ENCODE measurements at regions of chr7 and their contacts with region 1.

Region 1: DNA sequence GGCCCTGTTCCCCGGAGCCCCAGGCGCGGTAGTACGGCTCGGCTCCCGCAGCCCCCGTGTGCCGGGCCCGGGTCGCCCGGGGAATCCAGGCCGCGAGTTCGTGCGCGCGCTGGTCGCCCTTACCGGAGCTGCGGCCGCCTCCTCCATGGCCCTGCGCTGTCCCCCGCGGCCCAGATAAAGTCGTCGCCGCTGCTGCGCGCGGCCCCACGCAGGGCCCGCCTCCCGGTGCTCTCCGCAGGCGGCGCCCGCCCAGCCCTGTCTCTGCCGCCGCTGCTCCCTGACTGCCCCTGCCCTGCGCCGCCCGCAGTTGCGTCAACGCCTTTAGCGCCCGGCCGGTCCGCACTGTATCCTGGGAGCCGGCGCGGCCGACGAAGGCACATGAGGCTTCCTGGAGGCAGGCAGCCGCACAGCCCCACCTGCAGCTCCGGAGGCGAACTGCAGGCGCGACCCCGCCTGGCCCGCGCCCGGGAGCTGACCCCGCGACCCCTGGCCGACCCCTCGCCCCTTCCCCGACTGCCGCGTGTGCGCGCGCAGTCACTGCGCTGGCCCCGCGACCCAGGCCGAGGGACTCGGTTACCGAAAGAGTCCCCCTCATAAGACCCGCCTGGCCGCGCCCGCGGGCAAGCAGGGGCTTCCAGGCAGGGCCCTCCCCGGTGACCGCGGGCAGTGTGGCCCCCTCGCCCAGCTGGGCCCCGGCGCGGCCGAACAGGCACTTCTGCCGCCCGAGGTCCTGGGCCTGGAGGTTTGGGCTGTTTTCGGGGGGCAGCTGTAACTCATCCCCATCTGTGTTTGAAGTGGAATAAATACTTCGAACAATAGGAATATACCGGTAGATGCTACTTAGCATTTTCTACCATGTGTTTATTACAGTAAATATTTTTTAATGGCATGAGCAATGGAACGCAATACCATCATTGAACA is 127.1 kb upstream of the ZNF746 start:
- DNase-seq: peak; percentile 79 to 93 (median 84)
- ATAC-seq: peak; percentile 95
- H3K4me3 ChIP-seq: peak overlapping the region; percentile 88
- H3K4me3 Mint-ChIP-seq: peak overlapping the region; percentile 91 to 96 (median 94)
- H3K27ac ChIP-seq: peak overlapping the region; percentile 80
- H3K27ac Mint-ChIP-seq: peak overlapping the region; percentile 50 to 95 (median 90)
- H3K4me1 ChIP-seq: peaks cover 19 to 37% of the 10 kb centered on the region in 2 donors
- H3K4me1 Mint-ChIP-seq: peaks cover 28 to 42% (median 37%) of the 10 kb centered on the region in 7 donors
- H3K27me3 ChIP-seq: no peaks in the 10 kb centered on the region
- H3K27me3 Mint-ChIP-seq: peaks cover 0 to 24% (median 4%) of the 10 kb centered on the region in 5 donors

Region 2: DNA sequence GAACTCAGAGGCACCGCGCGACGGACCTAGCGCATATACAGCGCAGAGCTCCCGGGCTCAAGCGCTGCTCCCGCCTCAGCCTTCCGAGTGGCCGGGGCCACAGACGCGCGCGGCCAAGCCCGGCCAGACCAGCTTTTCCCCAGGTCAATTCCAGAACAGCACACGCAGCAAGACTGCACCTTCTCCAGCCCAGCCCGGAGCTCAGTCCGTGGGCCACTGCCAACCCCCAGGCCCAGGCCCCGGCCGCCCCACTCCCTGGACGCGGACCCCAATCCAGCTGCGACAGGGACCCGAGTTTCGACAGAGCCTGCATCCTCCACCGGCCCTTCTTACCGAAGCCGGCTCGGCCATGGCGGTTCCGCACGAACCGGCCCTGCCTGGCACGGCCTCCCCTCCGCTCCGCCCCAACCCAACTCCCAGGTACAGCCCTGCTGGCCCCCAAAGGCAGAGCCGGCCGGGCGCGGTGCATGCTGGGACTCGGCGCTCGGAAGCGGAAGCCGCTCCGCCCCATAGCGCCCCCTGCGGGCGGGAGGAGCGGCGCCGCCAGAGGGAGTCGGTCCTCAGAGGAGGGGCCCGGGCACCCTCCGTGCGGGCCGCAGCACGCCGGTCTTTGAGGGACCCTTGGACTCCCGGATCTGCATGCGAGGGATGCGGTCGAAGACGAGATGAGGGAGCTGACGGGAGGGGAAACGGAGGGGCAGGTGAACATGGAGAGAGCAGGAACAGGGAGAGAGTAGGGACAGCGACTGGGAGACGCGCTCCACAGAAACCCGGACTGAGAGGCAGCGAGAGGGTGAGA is 498.6 kb before region 1 on chr7 and contains the start of gene ZNF425:
- CTCF ChIA-PET with region 1: no interaction called
- POLR2A ChIA-PET with region 1: no interaction called
- intact Hi-C with region 1: loop called (anchors 2 to 5 kb)
- DNase-seq: peak; percentile 87 to 98 (median 92)
- ATAC-seq: peak; percentile 98
- H3K4me3 ChIP-seq: peak within 1 kb of the TSS; percentile 99
- H3K4me3 Mint-ChIP-seq: peak within 1 kb of the TSS; percentile 91 to 100 (median 100)
- H3K27ac ChIP-seq: peak within 1 kb of the TSS; percentile 91
- H3K27ac Mint-ChIP-seq: peak within 1 kb of the TSS; percentile 90 to 100 (median 98)
- H3K4me1 ChIP-seq: no peaks in the 10 kb centered on the region
- H3K4me1 Mint-ChIP-seq: peaks cover 19 to 28% (median 22%) of the 10 kb centered on the region in 7 donors
- H3K27me3 ChIP-seq: no peaks in the 10 kb centered on the region
- H3K27me3 Mint-ChIP-seq: no peaks in the 10 kb centered on the region
- total RNA-seq, gene ZNF425: 0.61 to 4.9 (median 1.0) TPM

Region 3: DNA sequence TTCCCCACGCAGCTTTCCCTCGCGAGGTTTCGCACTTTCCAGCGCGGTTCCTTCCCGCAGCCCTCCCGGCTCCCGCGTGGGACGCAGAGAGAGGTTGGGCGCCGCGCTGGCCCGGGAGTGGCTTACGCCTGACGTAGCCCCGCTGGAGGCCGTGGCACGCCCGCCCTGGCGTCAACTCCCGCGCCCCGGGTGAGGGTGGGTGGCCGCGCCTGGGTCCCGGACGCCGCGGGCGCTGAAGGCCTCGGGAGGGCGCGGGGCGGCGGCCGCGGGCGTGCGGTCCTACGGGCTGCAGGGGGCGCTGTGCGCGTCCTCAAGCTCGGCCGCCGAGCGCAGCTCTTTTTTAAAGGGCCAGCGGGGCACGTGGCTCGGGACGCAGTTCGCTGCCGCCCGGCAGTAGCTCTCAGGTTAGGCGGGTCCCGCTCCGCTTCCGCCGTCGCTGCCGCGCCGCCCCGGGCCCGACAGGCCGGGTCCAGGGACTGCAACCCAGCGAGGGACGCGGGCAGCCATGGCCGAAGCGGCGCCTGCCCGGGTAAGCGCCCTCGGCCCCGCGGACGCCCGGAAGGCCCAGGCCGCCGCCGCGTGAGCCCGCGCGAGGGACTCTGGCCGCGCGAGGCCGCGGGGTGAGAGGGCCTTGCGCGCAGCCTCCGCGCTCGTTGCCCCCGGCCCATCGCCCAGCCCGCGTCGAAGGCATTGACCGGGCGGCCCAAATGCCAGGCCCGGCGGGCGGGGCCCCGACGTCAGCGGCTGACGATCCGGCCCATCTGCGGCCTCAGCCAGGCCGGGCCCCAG is 362.7 kb before region 1 on chr7 and contains the start of gene ZNF783:
- CTCF ChIA-PET with region 1: no interaction called
- POLR2A ChIA-PET with region 1: no interaction called
- intact Hi-C with region 1: loop called (anchors 1 to 2 kb)
- DNase-seq: peak; percentile 77 to 88 (median 86)
- ATAC-seq: peak; percentile 97
- H3K4me3 ChIP-seq: peak within 1 kb of the TSS; percentile 74
- H3K4me3 Mint-ChIP-seq: peak within 1 kb of the TSS; percentile 83 to 91 (median 88)
- H3K27ac ChIP-seq: peak within 1 kb of the TSS; percentile 71
- H3K27ac Mint-ChIP-seq: peak within 1 kb of the TSS; percentile 84 to 93 (median 90)
- H3K4me1 ChIP-seq: peaks cover 19 to 20% of the 10 kb centered on the region in 2 donors
- H3K4me1 Mint-ChIP-seq: peaks cover 22 to 46% (median 32%) of the 10 kb centered on the region in 7 donors
- H3K27me3 ChIP-seq: no peaks in the 10 kb centered on the region
- H3K27me3 Mint-ChIP-seq: no peaks in the 10 kb centered on the region
- total RNA-seq, gene ZNF783: 23.3 to 49.2 (median 36.0) TPM

Region 4: GRCh38 chr7:149460493-149461277 is 164.0 kb before region 1 on chr7 and contains the start of gene ZNF777:
- CTCF ChIA-PET with region 1: no interaction called
- POLR2A ChIA-PET with region 1: interaction called, 3 read pairs
- intact Hi-C with region 1: loop called (anchors 1 kb)
- DNase-seq: peak; percentile 65 to 84 (median 80)
- ATAC-seq: peak; percentile 99
- H3K4me3 ChIP-seq: peak within 1 kb of the TSS; percentile 80
- H3K4me3 Mint-ChIP-seq: peak within 1 kb of the TSS; percentile 78 to 91 (median 87)
- H3K27ac ChIP-seq: peak within 1 kb of the TSS; percentile 72
- H3K27ac Mint-ChIP-seq: peak within 1 kb of the TSS; percentile 28 to 89 (median 76)
- H3K4me1 ChIP-seq: peaks cover 4 to 16% of the 10 kb centered on the region in 2 donors
- H3K4me1 Mint-ChIP-seq: peaks cover 13 to 46% (median 35%) of the 10 kb centered on the region in 7 donors
- H3K27me3 ChIP-seq: no peaks in the 10 kb centered on the region
- H3K27me3 Mint-ChIP-seq: peaks cover 4 to 29% (median 10%) of the 10 kb centered on the region in 5 donors
- total RNA-seq, gene ZNF777: 11.2 to 16.1 (median 14.3) TPM

Region 5: DNA sequence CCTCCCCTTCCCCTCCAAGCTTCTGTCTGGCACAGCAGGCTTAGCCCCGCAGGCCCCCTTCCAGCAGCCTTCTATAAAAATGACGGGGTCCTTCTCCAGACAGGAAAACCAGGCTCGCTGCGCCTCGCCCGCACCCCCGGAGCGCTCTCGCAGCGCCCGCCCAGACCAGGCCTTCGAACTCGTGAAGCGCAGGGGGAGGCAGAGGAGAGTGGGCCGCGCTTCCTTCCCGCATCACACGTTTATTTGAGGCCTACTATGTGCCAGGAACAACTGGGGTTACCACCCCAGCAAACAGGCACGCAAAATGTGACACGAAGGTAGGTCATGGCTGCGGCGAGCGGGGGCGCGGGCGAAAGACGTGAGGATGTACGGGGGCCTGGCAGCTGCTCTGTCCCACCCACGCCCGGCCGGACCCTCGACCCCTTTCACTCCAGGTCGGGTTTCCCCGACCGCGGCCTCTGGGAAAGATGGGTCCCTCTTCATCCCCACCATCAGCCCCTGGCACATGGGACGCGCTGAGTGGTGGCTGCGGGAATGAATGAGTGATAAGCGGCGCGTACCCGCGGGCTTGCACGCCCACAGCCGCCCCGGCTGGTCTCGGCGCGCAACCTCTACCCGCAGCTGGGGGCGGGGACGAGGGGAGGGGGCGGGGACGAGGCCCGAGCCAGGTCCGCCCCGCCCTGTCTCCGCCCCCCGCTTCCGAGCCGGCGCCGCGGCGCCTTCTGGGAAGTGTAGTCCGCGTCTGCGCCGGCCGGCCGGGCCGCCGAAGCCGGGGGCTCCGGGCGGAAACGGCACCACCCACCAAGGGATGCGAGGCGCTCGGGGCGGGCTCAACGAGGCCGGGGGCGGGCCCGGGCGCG is 89.6 kb after region 1 on chr7:
- CTCF ChIA-PET with region 1: interaction called, 3 read pairs
- POLR2A ChIA-PET with region 1: no interaction called
- intact Hi-C with region 1: loop called (anchors 1 kb)
- DNase-seq: peak; percentile 68 to 89 (median 84)
- ATAC-seq: peak; percentile 99
- H3K4me3 ChIP-seq: peak overlapping the region; percentile 75
- H3K4me3 Mint-ChIP-seq: peak overlapping the region; percentile 71 to 87 (median 80)
- H3K27ac ChIP-seq: peak overlapping the region; percentile 72
- H3K27ac Mint-ChIP-seq: peak overlapping the region in 4 of 9 donors; percentile 5 to 72 (median 54)
- H3K4me1 ChIP-seq: peaks cover 10 to 13% of the 10 kb centered on the region in 2 donors
- H3K4me1 Mint-ChIP-seq: peaks cover 12 to 26% (median 19%) of the 10 kb centered on the region in 7 donors
- H3K27me3 ChIP-seq: no peaks in the 10 kb centered on the region
- H3K27me3 Mint-ChIP-seq: peaks cover 0 to 4% (median 0%) of the 10 kb centered on the region in 5 donors

Region 6: GRCh38 chr7:151226875-151227782 is 1602.5 kb after region 1 on chr7 and contains the start of gene ABCF2:
- CTCF ChIA-PET with region 1: no interaction called
- POLR2A ChIA-PET with region 1: no interaction called
- intact Hi-C with region 1: loop called (anchors 1 to 2 kb)
- DNase-seq: peak; percentile 91 to 98 (median 97)
- ATAC-seq: peak; percentile 99
- H3K4me3 ChIP-seq: peak within 1 kb of the TSS; percentile 91
- H3K4me3 Mint-ChIP-seq: peak within 1 kb of the TSS; percentile 90 to 99 (median 97)
- H3K27ac ChIP-seq: peak within 1 kb of the TSS; percentile 84
- H3K27ac Mint-ChIP-seq: peak within 1 kb of the TSS; percentile 68 to 97 (median 95)
- H3K4me1 ChIP-seq: peaks cover 16 to 25% of the 10 kb centered on the region in 2 donors
- H3K4me1 Mint-ChIP-seq: peaks cover 31 to 55% (median 47%) of the 10 kb centered on the region in 7 donors
- H3K27me3 ChIP-seq: no peaks in the 10 kb centered on the region
- H3K27me3 Mint-ChIP-seq: peaks cover 0 to 6% (median 0%) of the 10 kb centered on the region in 5 donors
- total RNA-seq, gene ABCF2: 17.2 to 37.8 (median 27.7) TPM

Measured in naive thymus-derived CD4-positive, alpha-beta T cell (primary cell).